Tibial artery (tissue), 4 donors: ENCODE measurements at regions of chr13 and their contacts with region 1.

Region 1: DNA sequence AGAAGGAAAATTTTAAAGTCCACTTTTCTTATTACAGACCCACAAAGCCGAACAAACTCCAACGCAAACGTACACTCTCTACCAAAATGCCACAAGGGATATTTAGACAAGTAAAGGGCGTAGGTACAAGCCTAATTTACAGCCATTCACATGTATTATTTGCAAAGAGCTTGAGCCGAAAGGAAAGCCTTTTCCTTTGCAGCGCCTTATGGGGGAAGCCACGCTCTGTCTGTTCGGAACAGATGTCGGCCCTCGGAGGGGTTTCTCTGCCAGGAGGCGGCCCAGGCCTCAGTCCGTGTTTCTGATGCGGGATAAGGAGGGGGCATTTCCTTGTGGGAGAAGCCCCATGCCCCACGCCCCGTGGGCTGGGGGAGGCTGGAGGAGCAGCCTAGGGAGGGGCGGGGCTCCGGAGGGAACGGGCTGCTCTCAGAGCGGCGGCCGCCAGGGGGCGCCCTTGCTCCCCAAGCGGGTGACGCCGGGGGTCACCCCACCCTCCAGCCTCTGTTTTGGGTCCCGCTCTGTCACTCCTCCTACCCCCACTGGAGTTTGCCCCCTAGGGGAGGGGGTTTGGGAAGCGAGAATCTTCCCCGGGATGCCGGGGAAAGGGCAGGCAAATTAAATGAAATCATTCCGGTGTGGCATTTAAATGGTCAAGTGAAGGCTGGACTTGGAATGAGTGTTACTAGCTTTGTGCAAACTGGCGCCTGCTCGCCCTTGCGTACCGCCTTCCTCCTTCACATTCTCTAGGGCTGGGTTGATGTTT is 2.9 kb downstream of the HTR2A start:
- DNase-seq: peak; percentile 58 to 85
- H3K4me3 ChIP-seq: peak overlapping the region; percentile 57 to 76
- H3K27ac ChIP-seq: peak overlapping the region; percentile 79 to 83
- H3K4me1 ChIP-seq: peaks cover 0 to 25% (median 13%) of the 10 kb centered on the region in 4 donors
- H3K27me3 ChIP-seq: no peaks in the 10 kb centered on the region
- CTCF ChIP-seq: peak; percentile 91 to 100

Region 2: GRCh38 chr13:46071590-46072249 is 822.3 kb before region 1 on chr13:
- intact Hi-C with region 1: no loop called
- DNase-seq: no peak
- H3K4me3 ChIP-seq: no peak overlapping the region
- H3K27ac ChIP-seq: no peak overlapping the region
- H3K4me1 ChIP-seq: no peaks in the 10 kb centered on the region
- H3K27me3 ChIP-seq: no peaks in the 10 kb centered on the region
- CTCF ChIP-seq: no peak

Region 3: DNA sequence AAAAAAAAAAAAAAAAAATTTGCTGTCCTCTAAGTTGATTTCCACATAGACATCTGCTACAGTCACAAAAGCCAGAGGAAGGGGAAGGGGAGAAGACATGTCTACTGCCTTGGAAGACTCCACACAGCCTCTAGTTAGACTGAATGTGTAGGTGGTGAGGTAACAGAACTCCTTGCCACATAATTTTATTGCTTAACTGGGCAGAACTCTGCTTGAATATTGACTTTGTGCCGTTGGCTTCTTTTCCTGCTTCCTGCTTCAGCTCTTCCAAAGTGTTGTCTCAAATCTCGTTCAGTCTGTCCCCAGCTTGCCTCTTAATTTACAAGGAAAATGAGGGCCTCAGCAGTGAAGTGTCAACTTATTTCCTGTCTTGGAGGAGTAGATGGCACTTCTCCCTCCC is 134.1 kb before region 1 on chr13:
- intact Hi-C with region 1: loop called (anchors 10 kb)
- DNase-seq: no peak
- H3K4me3 ChIP-seq: no peak overlapping the region
- H3K27ac ChIP-seq: peak overlapping the region; percentile 67 to 68
- H3K4me1 ChIP-seq: peaks cover 0 to 51% (median 26%) of the 10 kb centered on the region in 4 donors
- H3K27me3 ChIP-seq: no peaks in the 10 kb centered on the region
- CTCF ChIP-seq: no peak

Region 4: DNA sequence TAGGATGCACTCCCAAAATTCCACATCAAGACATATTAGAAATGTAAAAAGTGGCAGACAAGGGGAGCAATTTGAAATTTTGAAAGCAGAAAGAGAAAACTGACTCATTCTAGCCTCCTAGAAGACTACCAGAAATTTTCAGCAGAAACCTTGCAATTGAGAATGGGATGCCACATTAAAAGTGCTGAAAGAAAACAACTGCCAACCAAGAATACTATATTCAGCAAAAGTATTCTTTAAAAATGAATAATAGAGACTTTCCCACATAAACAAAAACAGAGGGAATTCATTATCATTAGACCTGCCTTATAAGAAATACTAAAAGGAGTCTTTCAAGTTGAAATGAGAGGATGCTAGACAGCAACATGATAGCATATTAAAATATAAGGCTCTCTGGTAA is 81.2 kb after region 1 on chr13:
- intact Hi-C with region 1: loop called (anchors 10 kb)
- DNase-seq: no peak
- H3K4me3 ChIP-seq: no peak overlapping the region
- H3K27ac ChIP-seq: no peak overlapping the region
- H3K4me1 ChIP-seq: no peaks in the 10 kb centered on the region
- H3K27me3 ChIP-seq: no peaks in the 10 kb centered on the region
- CTCF ChIP-seq: no peak

Region 5: GRCh38 chr13:47087841-47088240 is 193.9 kb after region 1 on chr13:
- intact Hi-C with region 1: loop called (anchors 10 kb)
- DNase-seq: no peak
- H3K4me3 ChIP-seq: no peak overlapping the region
- H3K27ac ChIP-seq: peak overlapping the region; percentile 70 to 73
- H3K4me1 ChIP-seq: peaks cover 0 to 58% (median 10%) of the 10 kb centered on the region in 4 donors
- H3K27me3 ChIP-seq: no peaks in the 10 kb centered on the region
- CTCF ChIP-seq: no peak

Region 6: GRCh38 chr13:47175172-47175866 is 281.3 kb after region 1 on chr13:
- intact Hi-C with region 1: loop called (anchors 10 kb)
- DNase-seq: no peak
- H3K4me3 ChIP-seq: no peak overlapping the region
- H3K27ac ChIP-seq: no peak overlapping the region
- H3K4me1 ChIP-seq: peaks cover 0 to 12% (median 1%) of the 10 kb centered on the region in 4 donors
- H3K27me3 ChIP-seq: no peaks in the 10 kb centered on the region
- CTCF ChIP-seq: no peak

Region 7: DNA sequence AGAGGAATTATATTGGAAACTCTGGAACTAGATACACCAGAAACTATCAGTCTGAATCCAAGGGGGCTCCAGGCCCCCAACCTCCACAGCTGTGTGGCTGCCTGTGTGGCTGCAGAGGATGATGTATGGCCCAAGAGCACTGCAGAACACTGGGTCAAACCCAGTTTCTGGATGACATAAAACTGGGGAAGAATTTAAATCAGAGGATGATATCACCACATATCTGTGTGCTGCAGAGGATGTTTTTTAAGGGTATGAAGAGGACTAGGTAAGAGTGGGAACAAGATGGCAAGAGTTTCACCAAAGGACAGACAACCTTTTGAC is 880.7 kb after region 1 on chr13:
- intact Hi-C with region 1: loop called (anchors 2 kb)
- DNase-seq: no peak
- H3K4me3 ChIP-seq: no peak overlapping the region
- H3K27ac ChIP-seq: no peak overlapping the region
- H3K4me1 ChIP-seq: peaks cover 0 to 5% (median 0%) of the 10 kb centered on the region in 4 donors
- H3K27me3 ChIP-seq: no peaks in the 10 kb centered on the region
- CTCF ChIP-seq: no peak